Aorta (tissue), 5 donors: ENCODE measurements at regions of chr4 and their contacts with region 1.

Region 1: GRCh38 chr4:128524311-128524710 is 236.7 kb upstream of the PGRMC2 start:
- DNase-seq: peak; percentile 88 to 91
- ATAC-seq: peak; percentile 83
- H3K4me3 ChIP-seq: no peak overlapping the region
- H3K27ac ChIP-seq: peak overlapping the region; percentile 87 to 95
- H3K4me1 ChIP-seq: peaks cover 3 to 6% of the 10 kb centered on the region in 2 donors
- H3K27me3 ChIP-seq: no peaks in the 10 kb centered on the region

Region 2: DNA sequence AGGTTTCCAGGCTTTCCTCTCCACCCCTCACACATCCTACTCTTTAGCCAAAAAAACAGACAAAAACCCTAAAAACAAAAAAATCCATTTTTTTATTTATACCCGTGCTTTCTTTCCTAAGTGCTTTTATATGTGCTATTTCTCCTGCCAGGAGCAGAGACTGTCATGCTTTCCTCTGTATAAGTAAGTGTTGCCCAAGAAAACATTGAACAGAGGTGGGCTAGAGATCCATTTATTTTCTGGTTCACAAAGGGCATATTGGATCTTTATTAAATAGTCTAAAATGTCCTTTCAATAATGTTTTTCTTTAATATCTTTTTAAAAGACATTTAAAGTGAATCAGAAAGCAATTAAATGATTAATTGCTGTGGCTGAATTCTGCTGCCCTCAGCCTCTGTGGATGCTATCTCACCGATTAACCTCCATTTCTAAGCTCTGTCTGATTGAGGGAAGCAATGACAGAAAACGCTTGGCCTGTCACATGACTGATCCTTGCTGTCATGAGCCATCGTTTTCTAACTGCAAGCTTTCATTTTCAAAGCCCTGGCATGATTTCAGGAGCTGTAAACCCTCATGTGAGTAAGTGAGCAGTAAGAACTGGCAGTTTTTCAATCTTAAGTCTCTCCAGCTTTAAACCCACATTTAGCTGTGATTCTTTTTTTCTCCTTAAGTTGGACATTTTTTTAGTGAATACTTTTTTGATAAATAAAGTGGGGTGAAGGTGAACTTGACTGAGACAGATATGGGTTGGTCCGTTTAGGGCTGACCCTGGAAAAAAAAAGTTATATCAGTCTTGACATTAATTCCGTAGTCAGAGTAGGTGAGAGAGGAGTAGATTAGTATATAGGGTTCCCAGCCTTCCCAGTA is 56.0 kb before region 1 on chr4:
- intact Hi-C with region 1: no loop called
- DNase-seq: peak in 1 of 2 donors; percentile 66
- ATAC-seq: peak; percentile 63
- H3K4me3 ChIP-seq: peak overlapping the region in 1 of 2 donors; percentile 6
- H3K27ac ChIP-seq: peak overlapping the region; percentile 68 to 73
- H3K4me1 ChIP-seq: peaks cover 0 to 5% of the 10 kb centered on the region in 2 donors
- H3K27me3 ChIP-seq: no peaks in the 10 kb centered on the region

Region 3: DNA sequence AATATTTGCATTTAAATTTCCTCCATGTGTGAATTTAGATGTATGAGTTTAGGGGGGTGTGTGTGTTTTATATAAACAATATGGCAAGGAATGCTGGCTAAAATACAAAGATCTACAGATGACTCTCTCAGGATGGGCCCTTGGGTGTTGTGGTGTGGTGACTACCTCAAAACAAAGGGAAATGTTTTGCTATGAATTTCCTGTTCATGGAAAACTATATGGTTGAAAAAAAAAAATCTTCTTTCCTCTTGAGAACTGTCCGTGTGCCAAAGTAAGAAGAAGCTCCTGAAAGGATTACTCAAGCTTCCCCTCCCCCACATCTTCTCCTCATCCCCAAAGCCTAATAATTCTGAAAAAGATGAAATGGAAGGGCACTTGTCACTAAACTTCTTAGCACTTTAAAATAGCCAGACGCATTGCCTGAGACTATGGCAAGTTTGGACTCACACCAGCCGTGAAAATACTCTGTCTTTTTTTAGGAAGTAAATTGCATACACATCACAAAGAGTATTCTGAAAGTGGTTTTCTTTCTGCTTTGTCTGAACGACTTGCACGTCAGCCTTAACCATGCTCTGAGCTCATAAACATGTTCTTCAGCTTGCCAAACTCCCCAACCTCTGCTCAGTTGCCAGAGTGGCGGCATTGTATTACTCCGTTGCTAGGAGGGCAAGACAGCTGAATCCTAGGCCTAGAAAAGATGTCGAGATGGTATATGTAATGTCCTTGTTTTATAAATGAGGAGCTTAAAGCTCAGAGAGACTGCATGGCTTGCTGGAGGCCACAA is 34.8 kb after region 1 on chr4:
- intact Hi-C with region 1: loop called in 1 of 2 experiments (anchors 5 kb)
- DNase-seq: peak in 1 of 2 donors; percentile 55
- ATAC-seq: peak; percentile 11
- H3K4me3 ChIP-seq: no peak overlapping the region
- H3K27ac ChIP-seq: peak overlapping the region; percentile 55 to 83
- H3K4me1 ChIP-seq: peaks cover 5% of the 10 kb centered on the region in 2 donors
- H3K27me3 ChIP-seq: no peaks in the 10 kb centered on the region

Region 4: DNA sequence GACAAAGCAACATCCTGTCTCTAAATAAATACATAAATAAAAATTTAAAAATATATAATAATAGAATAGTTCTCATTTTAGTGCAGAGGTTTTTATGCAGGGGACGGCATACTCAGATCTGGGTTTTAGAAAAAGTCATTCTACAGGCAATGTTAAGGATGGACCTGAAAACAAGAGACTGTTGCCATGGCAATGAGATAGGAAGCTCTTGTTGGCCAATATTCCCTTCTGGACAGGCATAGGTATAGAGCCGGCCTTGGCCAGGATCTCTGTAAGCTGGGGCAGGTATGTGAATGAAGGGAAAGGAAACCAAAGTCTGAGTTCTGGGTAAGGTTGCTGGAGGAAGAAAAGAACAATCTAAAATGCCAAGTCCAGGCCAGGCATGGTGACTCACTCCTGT is 97.8 kb after region 1 on chr4:
- intact Hi-C with region 1: no loop called
- DNase-seq: no peak
- ATAC-seq: no peak
- H3K4me3 ChIP-seq: no peak overlapping the region
- H3K27ac ChIP-seq: no peak overlapping the region
- H3K4me1 ChIP-seq: no peaks in the 10 kb centered on the region
- H3K27me3 ChIP-seq: no peaks in the 10 kb centered on the region